Activated CD4-positive, alpha-beta T cell treated with anti-CD3 and anti-CD28 coated beads for 36 hours (primary cell): ENCODE measurements at regions of chr22 and their contacts with region 1.

Region 1: DNA sequence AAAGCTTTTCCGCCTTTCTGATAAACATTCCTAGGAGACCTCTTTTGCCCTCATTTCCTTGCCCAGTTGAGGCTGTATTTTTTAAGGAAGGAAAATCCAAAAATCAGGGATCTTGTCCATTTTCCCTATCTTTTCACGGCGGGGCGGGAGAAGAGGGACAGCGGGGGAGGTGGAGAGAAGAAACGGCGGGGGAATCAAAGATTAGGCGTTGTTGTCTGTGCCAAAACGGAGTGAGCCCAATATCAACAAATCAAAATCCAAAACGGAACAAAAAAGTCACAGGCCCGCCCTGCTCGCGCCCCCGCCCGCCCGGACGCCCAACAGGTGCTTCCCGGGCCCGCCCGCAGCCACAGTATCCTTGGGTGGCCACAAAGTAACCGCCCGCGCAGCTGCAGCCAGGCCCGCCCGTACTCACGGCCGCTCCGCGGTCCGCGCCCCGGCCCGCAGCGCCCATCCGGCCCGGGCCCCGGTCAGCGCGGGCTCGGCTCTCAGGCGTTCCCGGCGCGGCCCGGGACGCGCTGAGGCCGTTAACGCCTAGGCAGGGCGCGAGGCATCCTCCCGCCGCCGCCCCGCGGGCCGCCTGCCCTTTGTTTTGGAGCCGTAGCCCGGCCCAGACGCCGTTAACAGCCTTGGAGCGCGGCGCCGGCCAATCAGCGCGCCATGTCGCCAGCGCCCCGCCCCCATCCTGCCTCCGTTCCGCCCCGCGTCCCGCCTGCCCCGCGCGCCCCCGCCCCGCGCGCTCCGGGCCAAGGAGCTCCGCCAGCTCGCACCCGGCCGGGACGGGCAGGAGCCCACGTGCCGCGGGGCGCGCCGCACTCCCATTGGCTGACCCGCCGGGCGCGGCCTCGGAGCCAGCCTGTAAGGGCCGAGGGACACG is at the start of gene YPEL1:
- DNase-seq: peak; percentile 96
- ATAC-seq: peak; percentile 95
- H3K4me3 Mint-ChIP-seq: peak within 1 kb of the TSS; percentile 84
- H3K27ac Mint-ChIP-seq: peak within 1 kb of the TSS; percentile 79
- H3K4me1 Mint-ChIP-seq: peaks cover 10% of the 10 kb centered on the region
- H3K27me3 Mint-ChIP-seq: peaks cover 3% of the 10 kb centered on the region
- total RNA-seq, gene YPEL1: 1.0 to 1.5 TPM

Region 2: GRCh38 chr22:21567456-21568346 is 167.7 kb before region 1 on chr22 and contains the start of gene UBE2L3:
- CTCF ChIA-PET with region 1: no interaction called
- POLR2A ChIA-PET with region 1: no interaction called
- intact Hi-C with region 1: loop called in 1 of 2 experiments (anchors 1 kb)
- DNase-seq: peak; percentile 93
- ATAC-seq: peak; percentile 68
- H3K4me3 Mint-ChIP-seq: peak within 1 kb of the TSS; percentile 92
- H3K27ac Mint-ChIP-seq: peak within 1 kb of the TSS; percentile 96
- H3K4me1 Mint-ChIP-seq: peaks cover 38% of the 10 kb centered on the region
- H3K27me3 Mint-ChIP-seq: no peaks in the 10 kb centered on the region
- total RNA-seq, gene UBE2L3: 57.3 to 75.5 TPM

Region 3: GRCh38 chr22:21657361-21658032 is 77.9 kb before region 1 on chr22:
- CTCF ChIA-PET with region 1: interaction called, 3 read pairs
- POLR2A ChIA-PET with region 1: no interaction called
- intact Hi-C with region 1: loop called in 1 of 2 experiments (anchors 2 kb)
- DNase-seq: peak; percentile 88
- ATAC-seq: peak; percentile 92
- H3K4me3 Mint-ChIP-seq: peak overlapping the region; percentile 76
- H3K27ac Mint-ChIP-seq: peak overlapping the region; percentile 31
- H3K4me1 Mint-ChIP-seq: peaks cover 13% of the 10 kb centered on the region
- H3K27me3 Mint-ChIP-seq: no peaks in the 10 kb centered on the region

Region 4: GRCh38 chr22:21666786-21667185 is 68.7 kb before region 1 on chr22:
- CTCF ChIA-PET with region 1: no interaction called
- POLR2A ChIA-PET with region 1: no interaction called
- intact Hi-C with region 1: loop called in 1 of 2 experiments (anchors 1 kb)
- DNase-seq: no peak
- ATAC-seq: no peak
- H3K4me3 Mint-ChIP-seq: peak overlapping the region; percentile 93
- H3K27ac Mint-ChIP-seq: peak overlapping the region; percentile 96
- H3K4me1 Mint-ChIP-seq: peaks cover 27% of the 10 kb centered on the region
- H3K27me3 Mint-ChIP-seq: no peaks in the 10 kb centered on the region

Region 5: DNA sequence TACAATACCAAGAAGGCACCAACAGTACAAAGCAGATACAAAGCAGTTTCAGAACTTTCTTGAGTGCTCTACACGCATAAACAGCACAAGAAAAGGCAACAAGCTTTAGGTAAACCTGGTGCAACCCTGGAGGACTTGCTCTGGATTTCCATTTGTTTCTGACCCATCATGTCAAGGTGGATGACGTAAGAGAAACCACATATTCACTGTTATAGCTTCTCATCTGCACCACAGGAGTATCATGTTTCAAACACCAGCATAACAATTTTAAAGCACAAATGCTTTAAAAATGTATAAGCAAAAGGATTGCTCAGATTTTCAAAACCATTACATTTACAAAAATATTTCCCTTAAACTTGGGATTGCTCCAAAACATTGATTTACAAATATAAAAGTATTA is 25.2 kb after region 1 on chr22:
- CTCF ChIA-PET with region 1: interaction called, 3 read pairs
- POLR2A ChIA-PET with region 1: interaction called, 6 read pairs
- intact Hi-C with region 1: loop called in 1 of 2 experiments (anchors 1 kb)
- DNase-seq: no peak
- ATAC-seq: no peak
- H3K4me3 Mint-ChIP-seq: no peak overlapping the region
- H3K27ac Mint-ChIP-seq: no peak overlapping the region
- H3K4me1 Mint-ChIP-seq: peaks cover 50% of the 10 kb centered on the region
- H3K27me3 Mint-ChIP-seq: no peaks in the 10 kb centered on the region

Region 6: DNA sequence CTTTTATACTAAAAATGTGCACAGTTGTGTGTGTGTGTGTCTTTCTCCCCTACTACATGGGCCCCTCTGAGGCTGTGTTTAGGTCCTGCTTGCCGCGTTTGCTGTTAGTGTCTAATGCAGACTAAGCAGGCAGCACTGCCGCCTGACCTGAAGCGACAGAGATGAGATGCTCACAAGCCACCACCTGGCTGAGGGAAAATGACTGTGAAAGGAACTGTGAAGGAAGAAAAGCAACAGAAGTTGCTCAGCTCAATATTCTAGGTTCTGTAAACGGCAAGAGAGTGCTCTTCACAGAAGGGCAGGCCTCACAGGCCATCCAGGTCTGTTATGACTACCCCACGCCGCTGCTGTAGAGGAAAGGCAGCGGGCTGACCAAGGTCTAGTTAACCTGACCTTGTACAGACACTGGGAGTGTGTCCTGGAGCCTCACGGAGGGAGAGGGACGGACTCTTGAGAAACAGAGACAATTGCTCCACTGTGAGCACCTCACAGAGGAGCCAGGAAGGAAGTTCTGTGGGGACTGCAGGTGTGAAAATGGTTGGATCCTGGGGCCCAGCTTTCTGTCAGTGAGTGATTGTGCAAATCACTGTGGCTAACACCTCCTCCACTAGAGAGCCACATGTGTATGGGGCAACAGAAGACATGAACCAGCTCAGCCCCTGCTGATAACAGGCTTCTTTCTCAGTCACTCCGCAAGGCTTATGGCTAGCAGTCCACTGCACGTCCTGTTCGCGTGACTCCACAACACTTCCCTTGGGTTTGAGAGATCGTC is 31.4 kb after region 1 on chr22:
- CTCF ChIA-PET with region 1: interaction called, 3 read pairs
- POLR2A ChIA-PET with region 1: interaction called, 6 read pairs
- intact Hi-C with region 1: loop called in 1 of 2 experiments (anchors 1 kb)
- DNase-seq: peak; percentile 83
- ATAC-seq: peak; percentile 77
- H3K4me3 Mint-ChIP-seq: no peak overlapping the region
- H3K27ac Mint-ChIP-seq: peak overlapping the region; percentile 71
- H3K4me1 Mint-ChIP-seq: peaks cover 65% of the 10 kb centered on the region
- H3K27me3 Mint-ChIP-seq: no peaks in the 10 kb centered on the region